Activated T-helper 1 cell treated with anti-CD3 and anti-CD28 coated beads, Interleukin-12 subunit alpha, Interleukin-12 subunit beta, Interleukin-2, Interleukin-4 antibody, amounts not matched to agents 30 ng/mL and 10 ng/mL and 1 ng/mL, durations not matched to agents 14 hours and 24 hours and 36 hours (primary cell): ENCODE measurements at regions of chr3 and their contacts with region 1.

Region 1: DNA sequence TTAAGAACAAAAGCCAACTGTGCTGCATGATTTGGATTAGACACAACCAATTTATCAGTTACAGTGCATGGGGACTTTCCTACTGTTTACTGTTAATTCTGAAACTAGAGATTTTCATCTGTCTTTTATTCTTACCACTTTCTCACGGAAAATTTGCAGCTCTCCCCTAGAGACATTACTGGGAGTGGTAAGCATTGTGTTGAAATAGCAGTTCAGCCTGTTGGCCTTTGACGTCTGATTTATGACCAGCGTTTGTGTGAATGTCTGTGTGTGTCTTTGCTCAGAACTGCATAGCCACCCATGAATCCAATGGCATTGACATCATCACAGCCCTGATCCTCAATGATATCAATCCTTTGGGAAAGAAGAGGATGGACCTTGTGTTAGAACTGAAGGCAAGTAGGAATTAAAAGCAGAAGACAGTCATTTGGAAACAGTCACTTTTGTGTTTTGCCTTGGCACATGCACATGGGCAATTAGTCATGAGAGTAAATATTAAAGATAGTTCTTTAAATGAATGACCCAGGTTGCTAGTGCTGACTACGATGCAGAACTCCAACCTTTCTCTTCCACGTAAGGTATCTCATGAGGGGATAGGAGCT is 202.2 kb upstream of the BHLHE40 start:
- DNase-seq: peak; percentile 32
- H3K4me3 Mint-ChIP-seq: peak overlapping the region; percentile 73
- H3K27ac Mint-ChIP-seq: peak overlapping the region; percentile 98
- H3K4me1 Mint-ChIP-seq: peaks cover 82% of the 10 kb centered on the region
- H3K27me3 Mint-ChIP-seq: no peaks in the 10 kb centered on the region

Region 2: DNA sequence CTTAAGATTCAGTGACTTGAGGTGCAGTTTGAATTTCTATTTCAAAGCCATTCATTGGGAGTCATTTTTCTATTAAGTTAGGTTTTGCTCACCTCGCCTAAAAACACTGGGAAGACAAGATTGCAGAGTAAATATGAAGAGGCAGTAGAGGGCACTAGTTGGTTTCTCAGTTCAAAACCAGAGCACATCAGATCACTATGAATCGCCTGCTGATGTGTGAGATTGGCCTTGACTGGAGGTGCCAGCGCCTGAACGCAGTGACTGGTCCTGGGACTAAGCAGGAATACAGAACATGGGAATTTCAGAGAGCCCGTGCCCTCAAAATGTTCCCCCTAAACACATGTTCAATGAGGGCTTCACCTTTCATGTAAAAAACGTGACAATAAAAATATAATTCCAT is 55.0 kb before region 1 on chr3:
- intact Hi-C with region 1: loop called (anchors 1 kb)
- DNase-seq: no peak
- H3K4me3 Mint-ChIP-seq: no peak overlapping the region
- H3K27ac Mint-ChIP-seq: peak overlapping the region; percentile 90
- H3K4me1 Mint-ChIP-seq: peaks cover 78% of the 10 kb centered on the region
- H3K27me3 Mint-ChIP-seq: no peaks in the 10 kb centered on the region

Region 3: DNA sequence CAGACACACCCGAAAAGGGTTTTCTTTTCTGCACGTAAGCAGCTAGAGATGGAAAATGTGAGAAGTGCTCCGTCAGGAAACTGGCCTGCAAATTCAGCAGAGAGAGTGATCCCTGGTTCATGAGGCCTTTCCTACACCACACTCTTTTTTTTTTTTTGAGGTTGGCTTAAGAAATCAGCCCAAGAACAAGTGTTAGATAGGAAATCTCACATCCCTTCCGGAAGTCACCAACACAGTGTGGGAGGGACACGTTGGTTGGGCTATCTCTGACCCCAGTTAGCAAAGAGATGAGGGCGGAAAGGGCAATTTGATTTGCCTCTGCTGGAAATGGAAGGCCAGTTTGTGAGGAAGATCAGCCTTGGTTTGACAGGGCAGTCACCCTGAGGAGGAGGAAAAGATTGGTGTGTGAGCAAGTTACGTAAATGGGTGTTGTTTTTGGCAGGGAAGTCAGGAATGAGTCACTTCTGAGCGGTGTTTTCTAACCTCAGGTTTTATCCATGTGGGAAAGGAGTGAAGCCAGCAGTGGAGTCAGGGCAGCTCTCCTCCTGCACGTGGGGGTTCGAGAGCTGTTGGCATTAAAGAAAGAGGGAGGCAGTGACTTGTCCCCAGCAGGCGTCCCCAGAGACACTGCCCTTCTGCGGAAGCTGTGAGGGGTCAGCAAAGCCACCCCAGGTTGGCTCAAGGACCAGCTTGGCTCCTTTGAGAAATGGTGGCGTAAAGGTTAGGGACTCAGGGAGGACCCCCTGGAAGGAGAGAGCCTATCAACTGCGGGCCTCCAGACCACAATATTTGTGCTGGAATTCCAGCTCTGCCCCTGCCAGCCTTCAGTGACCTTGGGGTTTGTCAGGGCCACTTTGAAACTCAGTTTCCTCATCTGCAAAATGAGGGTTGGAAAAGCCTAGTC is 35.4 kb before region 1 on chr3:
- intact Hi-C with region 1: loop called (anchors 1 kb)
- DNase-seq: no peak
- H3K4me3 Mint-ChIP-seq: peak overlapping the region; percentile 74
- H3K27ac Mint-ChIP-seq: peak overlapping the region; percentile 89
- H3K4me1 Mint-ChIP-seq: peaks cover 79% of the 10 kb centered on the region
- H3K27me3 Mint-ChIP-seq: no peaks in the 10 kb centered on the region

Region 4: DNA sequence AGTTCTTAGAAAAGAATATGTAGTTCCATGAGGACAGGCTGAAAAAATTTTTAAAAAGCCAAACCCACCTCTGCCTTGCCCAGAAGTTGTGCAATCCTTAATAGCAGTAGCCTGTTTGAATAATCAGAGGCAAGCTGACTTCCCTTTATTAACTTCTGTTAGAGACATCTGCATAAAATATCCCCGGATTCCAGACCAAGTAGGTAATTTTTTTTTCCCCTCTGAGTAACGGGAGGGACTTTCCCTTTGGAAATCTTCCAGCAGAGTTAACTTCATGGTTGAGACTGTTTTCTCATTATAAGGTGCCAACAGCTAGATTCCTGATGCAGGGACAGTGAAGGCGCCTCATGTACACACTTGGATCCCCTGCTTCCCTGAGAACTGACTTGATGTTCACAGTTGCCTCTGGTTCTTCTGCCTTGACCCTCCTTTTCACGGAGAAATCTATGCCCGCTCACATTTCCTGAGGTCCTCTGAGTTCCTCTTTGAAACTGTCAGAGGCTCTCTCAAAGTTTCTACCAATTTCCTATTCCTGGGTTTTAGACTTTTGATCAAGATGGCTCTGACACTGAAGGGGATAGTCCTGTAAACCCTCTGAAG is 25.5 kb before region 1 on chr3:
- intact Hi-C with region 1: loop called (anchors 1 kb)
- DNase-seq: no peak
- H3K4me3 Mint-ChIP-seq: no peak overlapping the region
- H3K27ac Mint-ChIP-seq: peak overlapping the region; percentile 94
- H3K4me1 Mint-ChIP-seq: peaks cover 90% of the 10 kb centered on the region
- H3K27me3 Mint-ChIP-seq: no peaks in the 10 kb centered on the region

Region 5: GRCh38 chr3:4804161-4805058 is 27.3 kb after region 1 on chr3:
- intact Hi-C with region 1: loop called (anchors 1 kb)
- DNase-seq: no peak
- H3K4me3 Mint-ChIP-seq: no peak overlapping the region
- H3K27ac Mint-ChIP-seq: peak overlapping the region; percentile 76
- H3K4me1 Mint-ChIP-seq: peaks cover 59% of the 10 kb centered on the region
- H3K27me3 Mint-ChIP-seq: no peaks in the 10 kb centered on the region

Region 6: GRCh38 chr3:4821975-4822374 is 44.9 kb after region 1 on chr3:
- intact Hi-C with region 1: loop called (anchors 2 kb)
- DNase-seq: peak; percentile 82
- H3K4me3 Mint-ChIP-seq: peak overlapping the region; percentile 86
- H3K27ac Mint-ChIP-seq: peak overlapping the region; percentile 100
- H3K4me1 Mint-ChIP-seq: peaks cover 98% of the 10 kb centered on the region
- H3K27me3 Mint-ChIP-seq: no peaks in the 10 kb centered on the region

Region 7: DNA sequence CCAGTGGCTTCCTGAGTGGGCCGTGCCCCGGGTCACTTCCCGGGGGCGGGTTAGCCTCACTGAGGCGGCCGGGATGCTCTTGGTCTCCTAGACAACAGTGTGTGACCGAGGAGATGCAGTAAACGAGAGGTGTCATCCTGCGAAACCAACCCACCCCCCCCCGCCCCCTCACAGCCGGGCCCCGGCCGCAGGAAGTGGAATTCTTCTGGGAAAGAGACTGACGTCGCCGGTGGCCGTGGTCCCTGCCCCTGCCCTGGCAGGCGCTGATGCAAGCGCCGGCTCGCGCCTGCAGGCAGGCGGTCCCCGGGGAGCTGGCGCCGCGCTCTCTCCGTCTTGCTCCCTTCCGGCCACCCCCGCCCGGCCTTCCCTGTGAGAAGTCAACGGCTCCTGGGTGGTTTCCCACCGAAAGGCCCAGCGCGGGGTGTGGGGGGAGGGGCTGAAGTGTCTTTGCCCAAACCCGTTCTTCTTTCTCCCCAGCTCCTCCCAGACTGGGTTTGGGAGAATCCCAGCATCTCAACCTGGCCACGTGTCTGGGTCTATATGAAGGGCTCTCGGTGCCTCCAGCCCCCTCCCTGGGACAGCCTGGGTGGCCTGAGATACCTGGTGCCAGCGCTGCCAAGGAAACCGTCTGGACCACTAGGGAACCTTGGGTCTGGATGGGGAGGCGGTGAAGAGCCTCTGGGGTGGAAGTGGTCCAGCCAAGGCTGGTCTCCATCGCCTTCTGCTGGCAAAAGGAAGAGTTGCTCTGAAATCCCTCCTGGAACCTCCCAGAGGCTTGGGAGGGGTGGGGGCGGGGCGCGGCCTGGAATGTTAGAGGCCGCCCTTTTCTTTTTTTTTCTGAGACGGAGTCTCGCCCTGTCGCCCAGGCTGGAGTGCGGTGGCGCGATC is 249.5 kb after region 1 on chr3:
- intact Hi-C with region 1: loop called (anchors 1 kb)
- DNase-seq: peak; percentile 59
- H3K4me3 Mint-ChIP-seq: peak overlapping the region; percentile 81
- H3K27ac Mint-ChIP-seq: peak overlapping the region; percentile 95
- H3K4me1 Mint-ChIP-seq: peaks cover 70% of the 10 kb centered on the region
- H3K27me3 Mint-ChIP-seq: no peaks in the 10 kb centered on the region